Heart left ventricle (tissue), 16 donors: ENCODE measurements at regions of chr19 and their contacts with region 1.

Region 1: GRCh38 chr19:6164906-6165531 is 29.6 kb downstream of the ACSBG2 start:
- DNase-seq: no peak
- ATAC-seq: no peak
- H3K4me3 ChIP-seq: no peak overlapping the region
- H3K27ac ChIP-seq: no peak overlapping the region
- H3K4me1 ChIP-seq: peaks cover 0 to 6% (median 0%) of the 10 kb centered on the region in 12 donors
- H3K27me3 ChIP-seq: no peaks in the 10 kb centered on the region
- CTCF ChIP-seq: no peak
- POLR2A ChIP-seq: no peak

Region 2: DNA sequence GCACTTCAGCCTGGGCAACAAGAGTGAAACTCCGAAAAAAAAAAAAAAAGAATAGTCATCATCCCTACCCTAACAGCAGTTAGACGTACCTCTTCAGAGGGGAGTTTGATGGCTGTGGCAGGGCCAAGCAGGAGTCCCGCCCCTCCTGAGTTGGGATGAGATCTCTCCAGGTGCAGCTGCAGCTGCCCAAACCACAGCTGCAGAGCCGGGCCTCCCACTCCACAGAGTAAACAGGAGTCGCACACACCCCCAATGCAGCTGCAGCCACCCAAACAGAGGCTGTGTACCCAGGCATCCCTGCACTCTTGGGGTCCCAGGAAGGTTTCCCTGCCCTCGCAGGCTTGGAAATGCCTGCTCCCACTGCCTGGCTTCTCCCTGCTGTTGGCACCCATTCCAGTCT is 132.2 kb after region 1 on chr19:
- intact Hi-C with region 1: loop called in 2 of 10 experiments (anchors 2 kb)
- DNase-seq: no peak
- ATAC-seq: no peak
- H3K4me3 ChIP-seq: no peak overlapping the region
- H3K27ac ChIP-seq: no peak overlapping the region
- H3K4me1 ChIP-seq: no peaks in the 10 kb centered on the region
- H3K27me3 ChIP-seq: peaks cover 0 to 8% (median 0%) of the 10 kb centered on the region in 9 donors
- CTCF ChIP-seq: no peak
- POLR2A ChIP-seq: no peak